Activated naive CD4-positive, alpha-beta T cell treated with anti-CD3 and anti-CD28 coated beads for 36 hours (primary cell): ENCODE measurements at regions of chr15 and their contacts with region 1.

Region 1: GRCh38 chr15:90001683-90002427 is 731 bp downstream of the ZNF710 start:
- DNase-seq: peak; percentile 70
- H3K4me3 Mint-ChIP-seq: peak overlapping the region; percentile 82
- H3K27ac Mint-ChIP-seq: peak overlapping the region; percentile 75
- H3K4me1 Mint-ChIP-seq: peaks cover 57% of the 10 kb centered on the region
- H3K27me3 Mint-ChIP-seq: no peaks in the 10 kb centered on the region

Region 2: DNA sequence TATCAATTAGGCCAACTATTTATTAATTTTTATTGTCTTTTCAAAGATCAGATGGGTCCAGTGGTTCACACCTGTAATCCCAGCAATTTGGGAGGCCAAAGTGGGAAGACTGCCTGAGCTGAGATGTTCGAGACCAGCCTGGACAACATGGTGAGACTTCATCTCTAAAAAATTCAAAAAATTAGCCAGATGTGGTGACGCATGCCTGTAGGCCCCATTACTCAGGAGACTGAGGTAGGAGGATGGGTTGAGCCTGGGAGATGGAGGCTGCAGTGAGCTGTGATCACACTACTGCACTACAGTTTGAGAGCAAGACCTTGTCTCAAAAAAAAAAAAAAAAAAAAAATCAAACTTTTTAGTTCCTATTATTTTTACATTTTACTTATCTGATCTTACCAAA is 116.2 kb before region 1 on chr15:
- CTCF ChIA-PET with region 1: no interaction called
- intact Hi-C with region 1: no loop called
- DNase-seq: no peak
- H3K4me3 Mint-ChIP-seq: no peak overlapping the region
- H3K27ac Mint-ChIP-seq: no peak overlapping the region
- H3K4me1 Mint-ChIP-seq: peaks cover 12% of the 10 kb centered on the region
- H3K27me3 Mint-ChIP-seq: no peaks in the 10 kb centered on the region

Region 3: GRCh38 chr15:90013503-90013937 is 11.7 kb after region 1 on chr15:
- CTCF ChIA-PET with region 1: interaction called, 4 read pairs
- intact Hi-C with region 1: loop called (anchors 1 kb)
- DNase-seq: no peak
- H3K4me3 Mint-ChIP-seq: no peak overlapping the region
- H3K27ac Mint-ChIP-seq: no peak overlapping the region
- H3K4me1 Mint-ChIP-seq: peaks cover 57% of the 10 kb centered on the region
- H3K27me3 Mint-ChIP-seq: no peaks in the 10 kb centered on the region

Region 4: GRCh38 chr15:90031231-90031791 is 29.5 kb after region 1 on chr15:
- CTCF ChIA-PET with region 1: interaction called, 13 read pairs
- intact Hi-C with region 1: loop called (anchors 1 kb)
- DNase-seq: peak; percentile 57
- H3K4me3 Mint-ChIP-seq: no peak overlapping the region
- H3K27ac Mint-ChIP-seq: peak overlapping the region; percentile 59
- H3K4me1 Mint-ChIP-seq: peaks cover 50% of the 10 kb centered on the region
- H3K27me3 Mint-ChIP-seq: no peaks in the 10 kb centered on the region

Region 5: GRCh38 chr15:90037961-90038631 is 36.2 kb after region 1 on chr15:
- CTCF ChIA-PET with region 1: interaction called, 13 read pairs
- intact Hi-C with region 1: loop called (anchors 1 kb)
- DNase-seq: peak; percentile 86
- H3K4me3 Mint-ChIP-seq: no peak overlapping the region
- H3K27ac Mint-ChIP-seq: peak overlapping the region; percentile 92
- H3K4me1 Mint-ChIP-seq: peaks cover 69% of the 10 kb centered on the region
- H3K27me3 Mint-ChIP-seq: no peaks in the 10 kb centered on the region

Region 6: GRCh38 chr15:90059208-90059985 is 57.5 kb after region 1 on chr15:
- CTCF ChIA-PET with region 1: no interaction called
- intact Hi-C with region 1: loop called (anchors 1 kb)
- DNase-seq: peak; percentile 94
- H3K4me3 Mint-ChIP-seq: peak overlapping the region; percentile 59
- H3K27ac Mint-ChIP-seq: peak overlapping the region; percentile 96
- H3K4me1 Mint-ChIP-seq: peaks cover 49% of the 10 kb centered on the region
- H3K27me3 Mint-ChIP-seq: no peaks in the 10 kb centered on the region

Region 7: DNA sequence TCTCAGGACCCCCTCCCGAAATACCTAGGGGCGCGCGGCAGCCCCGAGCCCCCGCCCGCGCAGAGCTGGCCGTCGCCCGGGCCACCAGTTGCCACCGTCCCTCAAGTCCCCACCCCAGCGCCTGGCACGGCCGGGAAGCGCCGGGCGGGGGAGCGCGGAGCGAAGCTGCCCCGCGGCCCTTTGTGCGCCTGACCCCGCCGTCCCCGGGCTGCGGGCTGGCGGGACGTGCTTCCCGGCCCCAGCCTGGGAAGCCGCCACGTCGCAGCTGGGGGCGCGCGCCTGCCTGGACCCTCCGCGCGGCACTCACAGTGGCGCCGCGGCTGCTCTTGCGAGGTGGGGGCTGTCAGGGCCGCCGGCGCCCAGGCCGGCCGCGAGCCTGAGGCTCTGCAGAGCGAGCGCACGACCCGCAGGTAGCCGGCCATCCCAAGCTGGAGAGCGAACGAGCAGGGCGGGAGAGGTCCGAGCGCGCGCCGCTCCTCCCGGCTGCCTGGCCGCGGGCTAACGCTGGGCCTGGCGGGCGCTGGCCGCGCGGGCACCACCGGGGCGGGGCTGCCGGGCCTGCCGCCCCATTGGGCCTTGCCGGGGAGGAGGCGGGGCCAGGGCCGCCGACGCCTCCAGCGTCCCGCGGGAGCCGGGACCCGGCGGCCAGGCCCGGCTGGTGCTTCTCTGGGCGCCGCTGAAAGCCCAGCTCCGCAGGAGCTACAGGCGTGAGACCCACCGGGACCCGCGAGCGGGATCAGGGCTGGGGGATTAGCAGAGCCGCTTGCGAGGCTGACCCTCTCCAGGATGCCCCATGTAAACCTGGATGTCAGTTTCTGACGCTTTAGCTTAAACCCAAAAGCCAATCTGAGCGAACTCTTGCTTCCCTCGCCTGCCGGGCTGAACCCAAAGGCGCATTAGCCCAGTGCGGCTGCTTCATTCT is 100.4 kb after region 1 on chr15 and contains the start of gene IDH2:
- CTCF ChIA-PET with region 1: no interaction called
- intact Hi-C with region 1: loop called (anchors 1 kb)
- DNase-seq: peak; percentile 64
- H3K4me3 Mint-ChIP-seq: peak within 1 kb of the TSS; percentile 91
- H3K27ac Mint-ChIP-seq: peak within 1 kb of the TSS; percentile 90
- H3K4me1 Mint-ChIP-seq: peaks cover 46% of the 10 kb centered on the region
- H3K27me3 Mint-ChIP-seq: no peaks in the 10 kb centered on the region
- total RNA-seq, gene IDH2: 225 to 229 TPM

Region 8: GRCh38 chr15:90265271-90266060 is 263.6 kb after region 1 on chr15 and contains the start of gene NGRN:
- CTCF ChIA-PET with region 1: no interaction called
- intact Hi-C with region 1: loop called (anchors 5 kb)
- DNase-seq: peak; percentile 95
- H3K4me3 Mint-ChIP-seq: peak within 1 kb of the TSS; percentile 83
- H3K27ac Mint-ChIP-seq: peak within 1 kb of the TSS; percentile 96
- H3K4me1 Mint-ChIP-seq: peaks cover 34% of the 10 kb centered on the region
- H3K27me3 Mint-ChIP-seq: no peaks in the 10 kb centered on the region
- total RNA-seq, gene NGRN: 30.7 to 31.0 TPM